HCT116 (cell line): ENCODE measurements at regions of chr19 and their contacts with region 1.

Region 1: DNA sequence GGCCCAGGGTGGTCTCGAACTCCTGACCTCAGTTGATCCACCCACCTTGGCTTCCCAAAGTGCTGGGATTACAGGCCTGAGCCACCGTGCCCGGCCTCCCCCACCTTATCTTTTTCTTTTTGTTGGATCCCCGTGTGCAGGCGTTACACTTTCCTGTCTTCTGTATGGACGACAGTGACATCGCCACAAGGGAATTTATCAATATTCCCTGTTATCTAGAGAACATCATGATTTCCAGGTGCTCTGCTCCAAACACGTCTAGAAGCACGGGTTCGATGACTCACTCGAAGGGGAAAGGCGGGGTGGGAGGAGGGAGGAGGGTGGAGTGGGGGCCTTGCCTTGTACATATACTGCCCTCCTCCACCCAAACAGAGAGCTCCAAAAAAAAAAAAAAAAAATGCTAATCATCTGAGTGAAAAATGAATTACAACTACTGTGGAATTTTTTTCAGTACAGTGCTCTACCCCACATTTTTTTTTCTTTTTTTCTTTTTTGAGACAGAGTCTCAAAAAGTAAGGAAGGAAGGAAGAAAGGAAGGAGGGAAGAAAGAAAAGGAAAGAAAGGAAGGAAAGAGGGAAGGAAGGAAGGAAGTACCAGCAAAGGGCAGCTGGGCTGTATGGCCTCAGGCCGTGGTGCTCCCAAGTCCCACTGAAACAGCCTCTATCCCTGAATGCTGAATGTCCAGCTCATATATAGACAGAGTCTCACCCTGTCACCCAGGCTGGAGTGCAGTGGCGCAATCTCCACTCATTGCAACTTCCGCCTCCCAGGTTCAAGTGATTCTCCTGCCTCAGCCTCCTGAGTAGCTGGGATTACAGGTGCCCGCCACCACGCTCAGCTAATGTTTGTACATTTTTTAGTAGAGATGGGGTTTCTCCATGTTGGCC is 36.8 kb downstream of the INSR start:
- DNase-seq: peak; percentile 72
- ATAC-seq: peak; percentile 90
- H3K4me3 ChIP-seq: peak overlapping the region in 1 of 2 experiments; percentile 2; a peak in 1 of 4 replicates
- H3K27ac ChIP-seq: peak overlapping the region; percentile 48; the same call in 1 of the 2 replicates
- H3K4me1 ChIP-seq: peaks cover 15 to 18% of the 10 kb centered on the region in 2 experiments; a peak in 3 of 4 replicates
- H3K27me3 ChIP-seq: no peaks in the 10 kb centered on the region
- CTCF ChIP-seq: no peak
- POLR2A ChIP-seq: no peak
- RAD21 ChIP-seq: no peak

Region 2: GRCh38 chr19:7197760-7198696 is 59.4 kb before region 1 on chr19:
- CTCF ChIA-PET with region 1: no interaction called
- POLR2A ChIA-PET with region 1: interaction called, 3 read pairs
- RAD21 ChIA-PET with region 1: interaction called in 1 of 2 experiments, 4 read pairs
- intact Hi-C with region 1: loop called (anchors 1 kb)
- DNase-seq: peak; percentile 84
- ATAC-seq: peak; percentile 86
- H3K4me3 ChIP-seq: peak overlapping the region; percentile 67 to 76
- H3K27ac ChIP-seq: peak overlapping the region; percentile 73
- H3K4me1 ChIP-seq: peaks cover 25 to 47% of the 10 kb centered on the region in 2 experiments
- H3K27me3 ChIP-seq: no peaks in the 10 kb centered on the region
- CTCF ChIP-seq: 0 out of 6 replicates have a peak, but pooled peaks of 1 of the 3 experiments have one; percentile 17
- POLR2A ChIP-seq: peak; percentile 91
- RAD21 ChIP-seq: 0 out of 2 replicates have a peak, but pooled peaks have one; percentile 8

Region 3: GRCh38 chr19:7293795-7294570 is 36.6 kb after region 1 on chr19 and contains the start of gene INSR:
- CTCF ChIA-PET with region 1: no interaction called
- POLR2A ChIA-PET with region 1: no interaction called
- RAD21 ChIA-PET with region 1: no interaction called
- intact Hi-C with region 1: loop called (anchors 5 kb)
- DNase-seq: peak; percentile 75
- ATAC-seq: peak; percentile 91
- H3K4me3 ChIP-seq: peak within 1 kb of the TSS; percentile 65 to 69
- H3K27ac ChIP-seq: peak within 1 kb of the TSS; percentile 70
- H3K4me1 ChIP-seq: peaks cover 10 to 21% of the 10 kb centered on the region in 2 experiments; a peak in 3 of 4 replicates
- H3K27me3 ChIP-seq: no peaks in the 10 kb centered on the region
- CTCF ChIP-seq: no peak
- POLR2A ChIP-seq: no peak
- RAD21 ChIP-seq: no peak
- total RNA-seq, gene INSR: 25.4 TPM